H1 (cell line): ENCODE measurements at regions of chr2 and their contacts with region 1.

Region 1: GRCh38 chr2:197113275-197113711 is 186.8 kb upstream of the PGAP1 start:
- DNase-seq: no peak
- H3K4me3 ChIP-seq: no peak overlapping the region
- H3K27ac ChIP-seq: no peak overlapping the region
- H3K4me1 ChIP-seq: no peaks in the 10 kb centered on the region
- H3K27me3 ChIP-seq: no peaks in the 10 kb centered on the region
- CTCF ChIP-seq: peak in 2 of 3 experiments; percentile 29 to 35; a peak in 2 of 4 replicates
- EP300 ChIP-seq: no peak
- POLR2A ChIP-seq: no peak
- RAD21 ChIP-seq: peak; percentile 62 to 67

Region 2: GRCh38 chr2:197097578-197098366 is 15.5 kb before region 1 on chr2:
- CTCF ChIA-PET with region 1: interaction called, 41 read pairs
- POLR2A ChIA-PET with region 1: no interaction called
- DNase-seq: no peak
- H3K4me3 ChIP-seq: no peak overlapping the region
- H3K27ac ChIP-seq: no peak overlapping the region
- H3K4me1 ChIP-seq: no peaks in the 10 kb centered on the region
- H3K27me3 ChIP-seq: no peaks in the 10 kb centered on the region
- CTCF ChIP-seq: no peak
- EP300 ChIP-seq: no peak
- POLR2A ChIP-seq: no peak
- RAD21 ChIP-seq: no peak

Region 3: DNA sequence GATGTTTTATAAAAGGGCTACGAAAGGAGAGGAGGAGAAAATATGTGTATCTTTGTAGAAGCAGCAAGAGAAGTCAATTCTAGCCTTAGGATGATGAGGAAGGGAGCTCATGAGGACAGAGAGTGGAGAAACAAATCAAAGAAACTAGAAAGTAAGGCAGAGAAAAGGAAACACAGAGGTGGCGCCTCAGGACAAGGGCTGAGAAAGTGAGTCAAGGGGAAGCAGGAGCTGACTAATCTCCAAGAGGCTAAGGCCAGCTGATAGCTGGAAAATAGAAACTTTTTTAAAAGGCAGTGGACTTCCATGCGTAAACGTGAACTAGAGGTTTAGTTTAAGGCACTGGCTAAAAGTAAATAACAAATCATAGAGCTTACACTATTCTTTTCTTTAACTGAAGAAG is 23.9 kb after region 1 on chr2:
- CTCF ChIA-PET with region 1: interaction called, 51 read pairs
- POLR2A ChIA-PET with region 1: no interaction called
- DNase-seq: no peak
- H3K4me3 ChIP-seq: no peak overlapping the region
- H3K27ac ChIP-seq: no peak overlapping the region
- H3K4me1 ChIP-seq: 0 out of 7 replicates have a peak, but pooled peaks cover 0 to 3% (median 0%) of the 10 kb centered on the region in 4 experiments
- H3K27me3 ChIP-seq: no peaks in the 10 kb centered on the region
- CTCF ChIP-seq: no peak
- EP300 ChIP-seq: no peak
- POLR2A ChIP-seq: no peak
- RAD21 ChIP-seq: no peak

Region 4: GRCh38 chr2:197159661-197160211 is 46.4 kb after region 1 on chr2:
- CTCF ChIA-PET with region 1: interaction called, 24 read pairs
- POLR2A ChIA-PET with region 1: interaction called, 3 read pairs
- DNase-seq: no peak
- H3K4me3 ChIP-seq: no peak overlapping the region
- H3K27ac ChIP-seq: no peak overlapping the region
- H3K4me1 ChIP-seq: peaks cover 0 to 10% (median 6%) of the 10 kb centered on the region in 4 experiments; a peak in 4 of 7 replicates
- H3K27me3 ChIP-seq: no peaks in the 10 kb centered on the region
- CTCF ChIP-seq: no peak
- EP300 ChIP-seq: no peak
- POLR2A ChIP-seq: no peak
- RAD21 ChIP-seq: no peak

Region 5: GRCh38 chr2:197219636-197220035 is 106.3 kb after region 1 on chr2:
- CTCF ChIA-PET with region 1: no interaction called
- POLR2A ChIA-PET with region 1: no interaction called
- DNase-seq: no peak
- H3K4me3 ChIP-seq: no peak overlapping the region
- H3K27ac ChIP-seq: no peak overlapping the region
- H3K4me1 ChIP-seq: no peaks in the 10 kb centered on the region
- H3K27me3 ChIP-seq: no peaks in the 10 kb centered on the region
- CTCF ChIP-seq: no peak
- EP300 ChIP-seq: no peak
- POLR2A ChIP-seq: no peak
- RAD21 ChIP-seq: no peak

Region 6: DNA sequence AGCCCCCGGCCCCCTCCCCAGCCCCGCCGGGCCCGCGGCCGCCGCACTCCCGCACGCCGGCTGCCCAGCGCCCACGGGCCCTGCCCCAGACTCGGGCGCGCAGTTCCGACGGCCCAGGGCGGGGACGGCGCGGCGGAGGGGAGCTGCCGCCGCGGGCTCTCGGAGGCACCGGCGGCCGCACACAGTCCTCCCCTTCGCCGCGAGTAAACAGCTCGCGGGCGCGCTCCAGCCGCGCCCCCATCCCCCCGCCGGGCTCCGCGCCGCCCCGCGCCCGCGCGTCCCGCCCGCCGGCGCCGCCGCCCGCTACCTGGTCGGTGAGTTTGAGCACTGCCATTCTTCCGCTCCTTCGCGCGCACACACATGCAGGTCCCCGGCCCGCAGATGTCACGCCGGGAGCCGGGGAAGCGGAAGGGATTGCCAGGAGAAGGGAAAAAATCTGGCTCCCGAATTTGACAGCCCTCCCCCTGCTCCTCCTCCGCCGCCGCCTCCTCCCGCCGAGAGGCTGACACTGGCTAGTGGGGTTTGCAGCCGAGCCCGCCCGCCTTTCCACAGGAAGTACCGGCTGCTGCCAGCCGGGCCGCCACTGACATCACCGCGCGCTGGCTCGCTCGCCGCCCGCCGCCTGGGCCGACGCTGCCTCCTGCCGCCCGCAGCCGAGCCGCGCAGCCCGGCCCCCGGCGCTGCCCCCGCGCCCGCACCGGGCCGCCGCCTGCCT is 197.1 kb after region 1 on chr2 and contains the start of gene ANKRD44:
- CTCF ChIA-PET with region 1: interaction called, 17 read pairs
- POLR2A ChIA-PET with region 1: no interaction called
- DNase-seq: peak; percentile 33 to 83
- H3K4me3 ChIP-seq: peak within 1 kb of the TSS; percentile 44 to 80 (median 66)
- H3K27ac ChIP-seq: no peak within 1 kb of the TSS
- H3K4me1 ChIP-seq: peaks cover 0 to 5% (median 3%) of the 10 kb centered on the region in 4 experiments; a peak in 4 of 7 replicates
- H3K27me3 ChIP-seq: peaks cover 9 to 34% (median 16%) of the 10 kb centered on the region in 4 experiments
- CTCF ChIP-seq: peak; percentile 37 to 67 (median 57)
- EP300 ChIP-seq: no peak
- POLR2A ChIP-seq: no peak
- RAD21 ChIP-seq: peak; percentile 53 to 62
- total RNA-seq, gene ANKRD44: 1.3 TPM in 2 replicates